Naive thymus-derived CD4-positive, alpha-beta T cell (primary cell): ENCODE measurements at regions of chr12 and their contacts with region 1.

Region 1: GRCh38 chr12:7018350-7019042 is at the start of gene LPCAT3:
- DNase-seq: peak; percentile 93 to 99 (median 98)
- ATAC-seq: peak; percentile 97
- H3K4me3 ChIP-seq: peak within 1 kb of the TSS; percentile 95
- H3K4me3 Mint-ChIP-seq: peak within 1 kb of the TSS; percentile 84 to 100 (median 94)
- H3K27ac ChIP-seq: peak within 1 kb of the TSS; percentile 89
- H3K27ac Mint-ChIP-seq: peak within 1 kb of the TSS; percentile 75 to 96 (median 93)
- H3K4me1 ChIP-seq: peaks cover 11 to 12% of the 10 kb centered on the region in 2 donors
- H3K4me1 Mint-ChIP-seq: peaks cover 25 to 46% (median 41%) of the 10 kb centered on the region in 7 donors
- H3K27me3 ChIP-seq: no peaks in the 10 kb centered on the region
- H3K27me3 Mint-ChIP-seq: no peaks in the 10 kb centered on the region
- total RNA-seq, gene LPCAT3: 16.7 to 37.9 (median 27.1) TPM

Region 2: DNA sequence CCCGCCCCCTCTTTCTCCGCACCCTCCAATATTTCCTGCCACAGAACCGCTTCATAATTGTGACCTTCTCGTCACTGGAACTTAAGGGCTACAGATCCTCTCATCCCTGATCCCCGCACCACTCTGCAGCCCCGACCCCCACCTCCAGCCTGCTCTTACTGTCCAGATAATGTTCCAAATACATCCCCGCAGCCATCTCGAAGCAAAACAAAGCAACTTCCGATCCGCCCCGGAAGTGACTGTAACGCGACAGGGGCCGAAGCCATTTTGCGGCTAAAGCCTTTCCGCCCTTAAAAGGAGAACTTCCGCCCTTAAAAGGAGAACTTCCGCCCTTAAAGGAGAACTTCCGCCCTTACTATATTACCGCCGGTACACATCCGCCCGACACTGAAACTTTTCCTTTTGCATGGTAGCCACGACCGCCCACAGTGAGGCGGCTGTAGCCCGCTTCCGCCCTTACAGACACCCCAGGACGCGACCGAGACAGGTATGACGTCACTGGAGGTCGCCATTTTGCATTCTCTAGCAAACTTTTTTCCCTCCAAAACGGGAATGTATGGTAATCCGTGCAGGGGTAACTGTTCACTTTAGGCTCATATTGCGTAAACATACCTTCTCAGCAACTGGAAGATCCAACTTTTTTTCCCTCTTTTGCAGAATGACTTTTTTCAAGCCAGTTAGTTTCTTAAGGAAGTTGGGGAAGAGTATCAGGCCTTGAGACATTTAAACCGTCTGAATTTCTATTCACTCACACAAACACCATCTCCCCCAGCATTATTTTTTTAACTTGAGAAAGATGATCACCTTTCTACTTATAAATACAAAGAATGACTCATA is 355.4 kb before region 1 on chr12 and contains the start of gene ING4:
- CTCF ChIA-PET with region 1: no interaction called
- POLR2A ChIA-PET with region 1: no interaction called
- intact Hi-C with region 1: loop called in 1 of 2 experiments (anchors 1 kb)
- DNase-seq: peak; percentile 79 to 99 (median 98)
- ATAC-seq: peak; percentile 99
- H3K4me3 ChIP-seq: peak within 1 kb of the TSS; percentile 92
- H3K4me3 Mint-ChIP-seq: peak within 1 kb of the TSS; percentile 92 to 99 (median 96)
- H3K27ac ChIP-seq: peak within 1 kb of the TSS; percentile 80
- H3K27ac Mint-ChIP-seq: peak within 1 kb of the TSS; percentile 91 to 99 (median 96)
- H3K4me1 ChIP-seq: peaks cover 15 to 16% of the 10 kb centered on the region in 2 donors
- H3K4me1 Mint-ChIP-seq: peaks cover 18 to 47% (median 36%) of the 10 kb centered on the region in 7 donors
- H3K27me3 ChIP-seq: no peaks in the 10 kb centered on the region
- H3K27me3 Mint-ChIP-seq: peaks cover 0 to 2% (median 0%) of the 10 kb centered on the region in 5 donors
- total RNA-seq, gene ING4: 33.1 to 101 (median 39.6) TPM

Region 3: DNA sequence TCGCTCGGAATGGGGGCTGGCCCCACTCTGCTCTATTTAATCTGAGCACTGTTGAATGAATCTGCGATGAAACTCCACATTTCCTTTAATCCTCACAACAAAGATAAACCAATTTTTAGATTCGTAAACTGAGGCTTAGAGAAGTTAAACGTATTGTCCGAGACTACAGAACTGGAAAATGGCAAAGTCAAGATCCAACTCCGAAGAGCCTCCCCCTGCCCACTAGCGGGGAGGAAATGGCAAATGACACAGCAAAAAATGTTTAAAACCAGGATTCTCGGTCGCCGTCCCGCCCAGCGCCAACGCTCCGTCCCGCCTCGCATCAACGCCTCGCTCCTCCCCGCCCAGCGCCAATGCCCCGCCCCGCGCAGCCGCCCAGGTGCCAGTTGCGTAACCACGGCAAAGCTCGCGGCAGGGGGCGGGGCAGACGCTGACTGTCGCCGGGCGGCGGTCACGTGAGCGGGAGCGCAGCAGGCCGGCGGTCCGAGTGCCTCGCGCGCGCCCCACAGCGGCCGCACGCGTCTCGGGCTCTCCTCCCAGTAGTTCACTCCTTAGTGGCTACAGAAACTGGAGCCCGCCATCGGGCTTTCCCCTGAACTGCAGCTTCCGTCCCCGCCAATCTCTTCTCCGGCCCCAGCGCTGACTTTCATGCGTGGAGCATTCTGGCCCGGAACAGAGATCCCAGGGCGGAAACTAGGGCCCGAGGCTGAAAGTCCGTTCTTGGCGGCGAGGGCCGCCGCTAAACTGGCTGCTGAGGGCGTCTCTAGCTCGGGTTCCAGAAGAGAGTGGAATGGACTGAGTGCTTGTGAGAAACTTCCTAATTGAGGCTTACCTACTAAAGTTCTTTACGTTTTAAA is 127.5 kb before region 1 on chr12:
- CTCF ChIA-PET with region 1: interaction called, 3 read pairs
- POLR2A ChIA-PET with region 1: no interaction called
- intact Hi-C with region 1: loop called (anchors 1 kb)
- DNase-seq: peak; percentile 95 to 100 (median 97)
- ATAC-seq: peak; percentile 96
- H3K4me3 ChIP-seq: peak overlapping the region; percentile 93
- H3K4me3 Mint-ChIP-seq: peak overlapping the region; percentile 78 to 86 (median 84)
- H3K27ac ChIP-seq: peak overlapping the region; percentile 86
- H3K27ac Mint-ChIP-seq: peak overlapping the region; percentile 82 to 94 (median 90)
- H3K4me1 ChIP-seq: peaks cover 6 to 10% of the 10 kb centered on the region in 2 donors
- H3K4me1 Mint-ChIP-seq: peaks cover 0 to 31% (median 11%) of the 10 kb centered on the region in 7 donors
- H3K27me3 ChIP-seq: no peaks in the 10 kb centered on the region
- H3K27me3 Mint-ChIP-seq: no peaks in the 10 kb centered on the region

Region 4: GRCh38 chr12:6937481-6938297 is 80.8 kb before region 1 on chr12:
- CTCF ChIA-PET with region 1: interaction called, 4 read pairs
- POLR2A ChIA-PET with region 1: interaction called, 3 read pairs
- intact Hi-C with region 1: loop called in 1 of 2 experiments (anchors 1 kb)
- DNase-seq: peak; percentile 81 to 96 (median 93)
- ATAC-seq: peak; percentile 97
- H3K4me3 ChIP-seq: peak overlapping the region; percentile 90
- H3K4me3 Mint-ChIP-seq: peak overlapping the region; percentile 75 to 88 (median 84)
- H3K27ac ChIP-seq: peak overlapping the region; percentile 92
- H3K27ac Mint-ChIP-seq: peak overlapping the region; percentile 91 to 99 (median 96)
- H3K4me1 ChIP-seq: peaks cover 5 to 29% of the 10 kb centered on the region in 2 donors
- H3K4me1 Mint-ChIP-seq: peaks cover 41 to 67% (median 51%) of the 10 kb centered on the region in 7 donors
- H3K27me3 ChIP-seq: no peaks in the 10 kb centered on the region
- H3K27me3 Mint-ChIP-seq: no peaks in the 10 kb centered on the region

Region 5: GRCh38 chr12:7042842-7043241 is 24.3 kb after region 1 on chr12:
- CTCF ChIA-PET with region 1: no interaction called
- POLR2A ChIA-PET with region 1: no interaction called
- intact Hi-C with region 1: loop called in 1 of 2 experiments (anchors 2 kb)
- DNase-seq: peak in 4 of 9 donors; percentile 5 to 12 (median 11)
- ATAC-seq: peak; percentile 40
- H3K4me3 ChIP-seq: no peak overlapping the region
- H3K4me3 Mint-ChIP-seq: no peak overlapping the region
- H3K27ac ChIP-seq: no peak overlapping the region
- H3K27ac Mint-ChIP-seq: no peak overlapping the region
- H3K4me1 ChIP-seq: no peaks in the 10 kb centered on the region
- H3K4me1 Mint-ChIP-seq: peaks cover 0 to 19% (median 15%) of the 10 kb centered on the region in 7 donors
- H3K27me3 ChIP-seq: no peaks in the 10 kb centered on the region
- H3K27me3 Mint-ChIP-seq: peaks cover 0 to 5% (median 0%) of the 10 kb centered on the region in 5 donors

Region 6: DNA sequence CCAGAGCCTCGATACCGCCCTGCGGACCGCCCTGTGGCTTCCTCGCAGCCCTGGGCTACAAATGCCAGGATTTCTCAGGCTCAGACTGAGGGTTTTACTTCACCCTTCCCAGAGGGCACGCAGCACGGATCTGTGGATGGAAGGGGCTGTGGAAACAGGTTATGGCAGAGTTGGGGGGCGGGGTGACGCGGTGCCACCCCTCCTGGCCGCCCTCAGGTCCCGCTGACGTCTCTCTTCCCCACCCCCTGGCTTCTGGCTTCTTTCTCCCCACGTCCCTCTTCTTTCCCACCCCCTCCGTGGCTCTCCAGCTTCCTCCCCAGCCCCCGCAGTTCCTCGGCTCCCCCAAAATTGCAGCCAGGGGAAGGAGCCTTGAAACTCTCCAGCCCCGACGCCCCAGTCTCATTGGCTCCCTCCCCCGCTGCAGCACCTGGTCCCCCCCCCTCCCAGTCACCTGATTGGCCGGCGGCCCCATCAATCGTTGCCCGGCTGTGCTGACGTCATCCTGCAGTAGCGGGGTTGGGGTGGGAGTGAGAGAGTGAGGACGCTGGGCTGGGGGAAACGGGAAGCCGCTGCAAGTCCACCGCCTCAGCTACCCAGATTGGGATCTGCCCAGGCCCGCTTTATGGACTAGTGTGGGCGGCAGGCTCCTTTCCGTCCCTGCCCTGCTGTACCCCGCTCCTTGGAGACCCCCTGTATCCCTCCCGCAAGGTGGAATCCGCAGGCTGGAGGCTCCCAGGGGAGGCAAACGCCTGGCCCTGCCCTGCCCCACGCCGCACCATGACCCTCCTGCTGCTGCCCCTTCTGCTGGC is 111.6 kb after region 1 on chr12 and contains the start of gene CLSTN3:
- CTCF ChIA-PET with region 1: no interaction called
- POLR2A ChIA-PET with region 1: no interaction called
- intact Hi-C with region 1: loop called in 1 of 2 experiments (anchors 1 kb)
- DNase-seq: peak; percentile 70 to 88 (median 83)
- ATAC-seq: peak; percentile 93
- H3K4me3 ChIP-seq: peak within 1 kb of the TSS; percentile 88
- H3K4me3 Mint-ChIP-seq: peak within 1 kb of the TSS; percentile 94 to 100 (median 96)
- H3K27ac ChIP-seq: peak within 1 kb of the TSS; percentile 73
- H3K27ac Mint-ChIP-seq: peak within 1 kb of the TSS; percentile 73 to 95 (median 92)
- H3K4me1 ChIP-seq: peaks cover 18% of the 10 kb centered on the region in 2 donors
- H3K4me1 Mint-ChIP-seq: peaks cover 29 to 41% (median 34%) of the 10 kb centered on the region in 7 donors
- H3K27me3 ChIP-seq: no peaks in the 10 kb centered on the region
- H3K27me3 Mint-ChIP-seq: no peaks in the 10 kb centered on the region
- total RNA-seq, gene CLSTN3: 20.2 to 76.3 (median 38.7) TPM